Calu3 (cell line): ENCODE measurements at regions of chr10 and their contacts with region 1.

Region 1: DNA sequence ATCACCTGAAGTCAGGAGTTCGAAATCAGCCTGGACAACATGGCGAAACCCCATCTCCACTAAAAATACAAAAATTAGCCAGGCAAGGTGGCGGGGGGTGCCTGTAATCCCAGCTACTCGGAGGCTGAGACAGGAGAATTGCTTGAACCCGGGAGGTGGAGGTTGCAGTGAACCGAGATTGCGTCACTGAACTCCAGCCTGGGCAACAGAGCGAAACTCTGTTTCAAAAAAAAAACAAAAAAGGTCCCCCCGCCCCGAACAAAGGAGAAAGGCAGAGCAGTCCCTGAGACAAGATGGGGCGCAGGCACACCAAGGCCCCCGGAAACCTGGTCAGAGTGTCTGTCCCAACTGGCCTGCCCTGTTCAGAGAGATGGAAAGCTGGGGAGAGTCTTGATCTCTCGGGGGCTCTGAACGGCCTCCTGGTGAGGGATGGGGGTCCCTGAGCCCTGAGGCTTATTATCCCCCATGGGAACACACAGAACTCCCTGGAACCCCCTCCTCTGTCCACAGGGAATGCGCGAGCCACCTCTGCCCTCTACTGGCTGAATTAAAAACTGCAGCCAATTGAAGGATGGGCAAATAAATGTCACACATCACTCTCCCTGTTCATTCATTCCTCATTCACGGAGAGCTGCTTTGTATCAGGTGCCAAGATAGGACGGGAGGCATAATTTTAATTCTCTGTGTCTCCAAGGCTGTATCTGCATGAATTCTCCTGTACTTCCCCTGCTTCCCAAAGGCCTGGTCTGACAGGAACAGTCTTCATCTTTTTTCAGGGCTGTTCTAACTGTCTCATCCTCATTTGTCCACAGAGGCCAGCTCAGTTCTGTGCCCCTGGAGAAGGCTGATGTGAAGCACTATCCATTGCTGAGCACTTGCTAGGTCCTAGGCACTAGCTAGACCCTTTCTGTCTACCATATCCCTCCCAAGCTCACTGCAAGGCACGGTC is 28.9 kb downstream of the MAT1A start:
- DNase-seq: peak; percentile 67
- H3K4me3 Mint-ChIP-seq: no peak overlapping the region
- H3K27ac Mint-ChIP-seq: no peak overlapping the region
- H3K4me1 Mint-ChIP-seq: no peaks in the 10 kb centered on the region
- H3K27me3 Mint-ChIP-seq: peaks cover 63% of the 10 kb centered on the region
- CTCF ChIP-seq: peak; percentile 93

Region 2: GRCh38 chr10:80535671-80536365 is 275.2 kb after region 1 on chr10:
- CTCF ChIA-PET with region 1: no interaction called
- intact Hi-C with region 1: loop called (anchors 10 kb)
- DNase-seq: peak; percentile 87
- H3K4me3 Mint-ChIP-seq: peak overlapping the region; percentile 88
- H3K27ac Mint-ChIP-seq: peak overlapping the region; percentile 67
- H3K4me1 Mint-ChIP-seq: peaks cover 12% of the 10 kb centered on the region
- H3K27me3 Mint-ChIP-seq: peaks cover 12% of the 10 kb centered on the region
- CTCF ChIP-seq: peak; percentile 89

Region 3: DNA sequence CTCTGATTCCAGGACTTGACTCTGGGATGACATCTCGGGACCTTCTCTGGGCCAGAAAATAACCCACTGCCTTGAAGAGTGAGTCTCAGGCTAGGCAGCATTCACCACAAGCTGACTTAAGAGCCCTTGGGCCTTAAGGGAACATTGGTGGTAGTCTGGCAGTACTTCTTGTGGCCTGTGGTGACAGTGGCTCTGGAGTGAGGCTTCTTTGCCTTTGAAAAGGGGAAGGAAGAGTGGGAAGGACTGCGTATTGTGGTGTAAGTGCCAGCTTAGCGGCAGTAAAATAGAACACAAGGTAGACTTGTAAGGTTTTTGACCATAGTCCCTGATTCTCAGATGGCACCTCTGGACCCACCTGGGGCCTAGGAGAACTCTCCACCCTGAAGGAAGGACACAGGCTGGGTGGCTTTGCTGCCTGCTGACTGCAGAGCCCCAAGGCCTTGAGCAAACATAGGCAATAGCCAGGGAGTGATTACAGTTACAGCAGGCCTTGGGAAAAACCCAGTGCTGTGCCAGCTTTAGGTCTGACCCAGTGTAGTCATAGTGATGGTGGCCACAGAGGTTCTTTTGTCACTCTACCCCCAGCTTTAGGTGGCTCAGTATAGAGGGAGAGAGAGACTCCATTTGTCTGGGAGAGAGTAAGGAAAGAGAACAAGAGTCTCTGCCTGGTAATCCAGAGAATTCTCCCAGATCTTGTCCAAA is 761.0 kb after region 1 on chr10:
- CTCF ChIA-PET with region 1: no interaction called
- intact Hi-C with region 1: no loop called
- DNase-seq: no peak
- H3K4me3 Mint-ChIP-seq: no peak overlapping the region
- H3K27ac Mint-ChIP-seq: no peak overlapping the region
- H3K4me1 Mint-ChIP-seq: peaks cover 8% of the 10 kb centered on the region
- H3K27me3 Mint-ChIP-seq: no peaks in the 10 kb centered on the region
- CTCF ChIP-seq: no peak